ENCODE measurements at regions of chr10 and their contacts with region 1.

Region 1: GRCh38 chr10:101818119-101818871 is at the start of gene OGA:
- DNase-seq: peak; percentile 100
- H3K4me3 ChIP-seq: peak within 1 kb of the TSS; percentile 83 to 98 (median 96)
- H3K27ac ChIP-seq: peak within 1 kb of the TSS; percentile 81 to 89
- H3K4me1 ChIP-seq: peaks cover 19 to 48% (median 30%) of the 10 kb centered on the region in 4 experiments
- H3K27me3 ChIP-seq: no peaks in the 10 kb centered on the region

Region 2: GRCh38 chr10:101830322-101831168 is 12.2 kb after region 1 on chr10:
- CTCF ChIA-PET with region 1: interaction called, 12 read pairs
- POLR2A ChIA-PET with region 1: interaction called, 4 read pairs
- DNase-seq: peak; percentile 94 to 96 (median 96)
- H3K4me3 ChIP-seq: peak overlapping the region; percentile 25 to 79 (median 65)
- H3K27ac ChIP-seq: peak overlapping the region; percentile 43 to 77
- H3K4me1 ChIP-seq: peaks cover 4 to 63% (median 53%) of the 10 kb centered on the region in 4 experiments
- H3K27me3 ChIP-seq: no peaks in the 10 kb centered on the region

Region 3: DNA sequence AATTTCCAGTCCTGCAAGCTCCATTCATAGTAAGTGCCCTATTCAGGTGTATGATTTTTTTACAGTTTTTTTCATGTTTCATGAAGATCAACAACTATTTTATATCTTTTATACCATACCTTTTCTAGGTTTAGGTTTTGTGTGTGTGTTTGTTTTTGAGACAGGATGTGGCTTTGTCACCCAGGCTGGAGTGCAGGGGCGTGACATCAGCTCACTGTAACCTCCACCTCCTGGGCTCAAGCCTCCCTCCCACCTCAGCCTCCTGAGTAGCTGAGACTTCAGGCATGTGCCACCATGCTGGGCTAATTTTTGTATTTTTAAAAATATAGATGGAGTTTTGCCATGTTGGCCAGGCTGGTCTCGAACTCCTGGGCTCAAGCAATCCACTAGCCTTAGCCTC is 202.6 kb after region 1 on chr10:
- CTCF ChIA-PET with region 1: no interaction called
- POLR2A ChIA-PET with region 1: no interaction called
- DNase-seq: no peak
- H3K4me3 ChIP-seq: no peak overlapping the region
- H3K27ac ChIP-seq: no peak overlapping the region
- H3K4me1 ChIP-seq: peaks cover 0 to 10% (median 4%) of the 10 kb centered on the region in 4 experiments
- H3K27me3 ChIP-seq: no peaks in the 10 kb centered on the region

Measured in common myeloid progenitor, CD34-positive (primary cell).